AG04450 (cell line): ENCODE measurements at regions of chr6 and their contacts with region 1.

Region 1: GRCh38 chr6:44096612-44097011 is 30.6 kb downstream of the MRPL14 start:
- DNase-seq: no peak
- H3K4me3 ChIP-seq: no peak overlapping the region
- H3K27ac ChIP-seq: no peak overlapping the region
- H3K27me3 ChIP-seq: no peaks in the 10 kb centered on the region
- CTCF ChIP-seq: peak; percentile 78

Region 2: GRCh38 chr6:44151348-44152108 is 54.9 kb after region 1 on chr6:
- CTCF ChIA-PET with region 1: interaction called, 25 read pairs
- POLR2A ChIA-PET with region 1: interaction called, 3 read pairs
- DNase-seq: no peak
- H3K4me3 ChIP-seq: no peak overlapping the region
- H3K27ac ChIP-seq: no peak overlapping the region
- H3K27me3 ChIP-seq: no peaks in the 10 kb centered on the region
- CTCF ChIP-seq: peak; percentile 98

Region 3: GRCh38 chr6:44221291-44221960 is 124.8 kb after region 1 on chr6:
- CTCF ChIA-PET with region 1: interaction called, 12 read pairs
- POLR2A ChIA-PET with region 1: no interaction called
- DNase-seq: no peak
- H3K4me3 ChIP-seq: no peak overlapping the region
- H3K27ac ChIP-seq: no peak overlapping the region
- H3K27me3 ChIP-seq: no peaks in the 10 kb centered on the region
- CTCF ChIP-seq: peak; percentile 71